ENCODE measurements at regions of chr11 and their contacts with region 1.

Region 1: DNA sequence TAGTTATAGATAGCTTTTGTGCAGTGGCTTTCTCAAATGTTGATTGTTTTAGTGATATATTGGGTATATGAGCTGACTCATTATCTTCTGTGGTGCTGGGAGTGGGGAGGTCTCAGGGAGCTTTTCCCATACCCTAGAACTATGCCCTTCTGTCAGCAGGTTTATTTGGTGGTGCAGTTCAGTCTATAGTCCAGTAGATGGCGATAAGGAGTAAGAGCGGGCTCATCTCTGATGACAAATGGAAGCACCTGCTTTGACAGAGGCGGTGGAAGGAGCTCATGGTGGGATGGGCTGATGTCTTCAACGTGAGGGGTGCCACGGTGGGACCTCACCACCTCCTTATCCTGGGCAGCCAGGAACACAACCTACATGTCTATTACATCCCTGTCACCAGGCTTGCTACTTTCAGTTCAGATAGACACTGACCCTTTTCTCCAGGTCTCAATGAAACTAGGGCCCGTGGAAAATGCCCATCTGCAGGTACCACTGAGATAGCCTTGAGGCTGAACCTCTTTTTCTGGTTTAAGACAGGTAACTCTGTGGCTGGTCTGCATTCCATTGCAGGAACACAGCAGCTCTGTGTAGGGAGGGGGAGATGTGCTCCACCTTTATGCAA is 13.0 kb upstream of the OR6A2 start:
- DNase-seq: peak; percentile 39 to 51 (median 45)
- H3K4me3 ChIP-seq: no peak overlapping the region
- H3K4me3 Mint-ChIP-seq: peak overlapping the region in 1 of 8 donors; percentile 36
- H3K27ac ChIP-seq: no peak overlapping the region
- H3K27ac Mint-ChIP-seq: no peak overlapping the region
- H3K4me1 ChIP-seq: no peaks in the 10 kb centered on the region
- H3K4me1 Mint-ChIP-seq: peaks cover 0 to 2% (median 0%) of the 10 kb centered on the region in 4 donors
- H3K27me3 ChIP-seq: no peaks in the 10 kb centered on the region
- H3K27me3 Mint-ChIP-seq: peaks cover 27 to 35% of the 10 kb centered on the region in 2 donors

Region 2: GRCh38 chr11:6794639-6795038 is 17.9 kb before region 1 on chr11:
- CTCF ChIA-PET with region 1: interaction called, 10 read pairs
- POLR2A ChIA-PET with region 1: no interaction called
- intact Hi-C with region 1: no loop called
- DNase-seq: no peak
- H3K4me3 ChIP-seq: no peak overlapping the region
- H3K4me3 Mint-ChIP-seq: no peak overlapping the region
- H3K27ac ChIP-seq: no peak overlapping the region
- H3K27ac Mint-ChIP-seq: no peak overlapping the region
- H3K4me1 ChIP-seq: no peaks in the 10 kb centered on the region
- H3K4me1 Mint-ChIP-seq: no peaks in the 10 kb centered on the region
- H3K27me3 ChIP-seq: no peaks in the 10 kb centered on the region
- H3K27me3 Mint-ChIP-seq: no peaks in the 10 kb centered on the region

Region 3: DNA sequence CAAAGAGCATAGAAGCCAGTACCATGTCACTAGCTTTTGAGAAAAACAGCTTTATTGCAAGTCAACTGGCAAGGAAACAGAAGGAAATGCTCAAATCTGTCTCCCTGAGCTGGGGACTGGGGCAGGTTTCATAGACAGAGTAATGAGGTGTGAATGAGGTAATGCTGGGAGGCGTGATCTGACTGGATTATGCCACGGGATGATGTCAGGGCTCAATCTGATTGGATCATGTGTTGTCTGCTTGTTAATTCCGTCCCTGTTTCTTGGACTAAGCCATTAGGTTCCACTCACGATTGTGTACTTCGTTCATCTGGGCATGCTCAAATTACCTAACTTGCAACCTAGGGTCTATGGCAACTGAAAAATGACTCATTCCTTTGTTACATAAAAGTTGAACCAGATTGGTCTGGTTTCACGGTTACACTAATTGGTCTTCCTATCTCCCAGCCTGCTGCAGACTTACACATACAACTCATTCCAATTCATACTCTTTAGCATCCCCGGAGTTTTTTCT is 12.8 kb after region 1 on chr11:
- CTCF ChIA-PET with region 1: interaction called, 13 read pairs
- POLR2A ChIA-PET with region 1: no interaction called
- intact Hi-C with region 1: no loop called
- DNase-seq: no peak
- H3K4me3 ChIP-seq: no peak overlapping the region
- H3K4me3 Mint-ChIP-seq: no peak overlapping the region
- H3K27ac ChIP-seq: no peak overlapping the region
- H3K27ac Mint-ChIP-seq: no peak overlapping the region
- H3K4me1 ChIP-seq: no peaks in the 10 kb centered on the region
- H3K4me1 Mint-ChIP-seq: no peaks in the 10 kb centered on the region
- H3K27me3 ChIP-seq: no peaks in the 10 kb centered on the region
- H3K27me3 Mint-ChIP-seq: peaks cover 5 to 13% of the 10 kb centered on the region in 2 donors

Region 4: DNA sequence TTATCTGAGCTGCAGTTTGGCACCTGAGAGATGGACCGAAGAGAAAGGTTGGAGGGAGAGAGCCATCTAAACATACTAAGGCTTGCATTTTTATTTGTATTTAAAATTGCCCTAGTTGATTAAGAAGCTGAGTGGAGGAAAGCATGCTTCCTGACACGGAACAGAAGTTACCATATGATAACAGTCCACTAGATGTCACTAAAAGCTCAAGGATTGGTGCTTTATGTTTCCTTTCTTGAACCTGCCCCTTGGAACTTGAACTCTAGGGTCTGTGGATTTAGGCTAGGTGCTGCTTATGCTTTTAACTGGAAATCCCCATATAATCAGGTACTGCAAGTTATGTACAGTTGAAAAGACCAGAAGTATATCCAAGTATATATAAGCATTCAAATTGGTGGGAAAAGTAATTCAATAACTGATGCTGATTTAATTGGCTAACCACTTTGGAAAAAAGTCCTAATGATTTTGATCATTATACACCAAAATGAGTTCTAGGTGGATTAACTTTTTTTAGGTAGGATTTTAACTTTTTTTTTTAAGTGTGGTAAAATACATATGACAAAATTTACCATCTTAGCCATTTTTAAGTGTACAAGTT is 285.8 kb after region 1 on chr11:
- CTCF ChIA-PET with region 1: no interaction called
- POLR2A ChIA-PET with region 1: no interaction called
- intact Hi-C with region 1: no loop called
- DNase-seq: peak; percentile 32 to 47 (median 39)
- H3K4me3 ChIP-seq: no peak overlapping the region
- H3K4me3 Mint-ChIP-seq: no peak overlapping the region
- H3K27ac ChIP-seq: no peak overlapping the region
- H3K27ac Mint-ChIP-seq: no peak overlapping the region
- H3K4me1 ChIP-seq: no peaks in the 10 kb centered on the region
- H3K4me1 Mint-ChIP-seq: no peaks in the 10 kb centered on the region
- H3K27me3 ChIP-seq: no peaks in the 10 kb centered on the region
- H3K27me3 Mint-ChIP-seq: peaks cover 5 to 11% of the 10 kb centered on the region in 2 donors

Region 5: DNA sequence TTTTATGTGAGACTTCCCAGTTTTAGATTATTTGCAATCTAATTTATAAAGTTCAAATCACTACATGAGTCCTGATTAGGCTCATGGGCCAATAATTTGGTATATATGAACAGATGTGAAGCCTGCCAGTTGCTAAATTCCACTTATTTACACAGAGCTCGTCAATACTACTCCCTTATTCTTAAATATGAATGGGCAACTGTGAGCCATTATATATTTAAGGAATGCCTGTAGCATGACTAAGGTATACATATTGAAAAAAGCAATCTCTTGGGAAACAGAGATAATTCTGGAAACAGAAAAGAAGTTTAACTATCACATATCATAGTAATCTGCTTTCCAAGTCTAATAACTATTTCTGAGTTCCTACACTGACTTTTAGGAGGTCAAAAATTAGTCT is 303.3 kb after region 1 on chr11:
- CTCF ChIA-PET with region 1: no interaction called
- POLR2A ChIA-PET with region 1: no interaction called
- intact Hi-C with region 1: no loop called
- DNase-seq: no peak
- H3K4me3 ChIP-seq: no peak overlapping the region
- H3K4me3 Mint-ChIP-seq: no peak overlapping the region
- H3K27ac ChIP-seq: no peak overlapping the region
- H3K27ac Mint-ChIP-seq: no peak overlapping the region
- H3K4me1 ChIP-seq: no peaks in the 10 kb centered on the region
- H3K4me1 Mint-ChIP-seq: no peaks in the 10 kb centered on the region
- H3K27me3 ChIP-seq: no peaks in the 10 kb centered on the region
- H3K27me3 Mint-ChIP-seq: peaks cover 7% of the 10 kb centered on the region in 2 donors

Measured in CD4-positive, alpha-beta memory T cell (primary cell).